OCI-LY7 (cell line): ENCODE measurements at regions of chr10 and their contacts with region 1.

Region 1: DNA sequence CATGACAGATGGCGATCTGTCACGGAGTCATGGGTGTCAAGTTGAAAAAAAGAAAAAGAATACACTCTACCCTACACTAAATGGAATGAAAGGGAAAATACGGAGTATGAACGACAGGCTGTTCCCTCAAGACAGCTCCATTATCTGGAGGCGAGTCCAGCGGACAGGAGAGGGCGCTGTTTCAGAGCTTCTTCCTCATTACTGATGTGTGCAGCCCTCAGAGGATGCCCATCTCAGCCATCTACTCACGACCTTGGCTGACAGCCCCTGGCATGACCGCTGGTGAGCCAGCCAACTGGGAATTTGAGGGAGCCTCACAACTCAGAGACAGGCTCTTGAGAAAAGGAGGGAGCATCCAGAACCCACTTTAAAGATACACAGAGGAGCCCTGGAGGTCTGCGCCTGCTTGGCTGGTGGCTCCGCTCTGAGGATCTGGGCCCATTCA is 49.6 kb upstream of the SMNDC1 start:
- DNase-seq: peak; percentile 89
- H3K4me3 ChIP-seq: peak overlapping the region; percentile 60
- H3K27ac ChIP-seq: peak overlapping the region; percentile 93
- H3K4me1 ChIP-seq: peaks cover 61% of the 10 kb centered on the region
- CTCF ChIP-seq: peak; percentile 98

Region 2: DNA sequence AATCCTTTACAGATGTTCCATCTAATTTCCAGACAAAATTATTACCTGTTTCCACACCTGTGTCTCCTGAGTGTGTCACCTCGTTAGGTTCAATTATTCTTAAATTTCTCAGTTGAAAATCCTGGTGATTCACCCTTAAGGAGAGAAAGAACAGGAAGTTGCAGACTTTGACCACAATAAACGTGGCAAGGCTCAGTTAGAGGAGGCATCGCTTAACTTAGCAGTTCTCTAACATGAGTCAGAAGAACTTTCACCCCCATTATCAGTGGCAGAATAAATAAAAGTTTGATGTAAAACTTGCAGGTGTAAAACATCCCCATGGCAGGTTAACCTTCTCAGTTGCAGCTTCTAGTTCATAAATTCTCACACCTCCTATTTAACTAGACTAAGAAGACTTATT is 439.4 kb before region 1 on chr10:
- CTCF ChIA-PET with region 1: no interaction called
- POLR2A ChIA-PET with region 1: no interaction called
- intact Hi-C with region 1: loop called (anchors 5 kb)
- DNase-seq: peak; percentile 81
- H3K4me3 ChIP-seq: peak overlapping the region; percentile 40
- H3K27ac ChIP-seq: peak overlapping the region; percentile 98
- H3K4me1 ChIP-seq: peaks cover 88% of the 10 kb centered on the region
- CTCF ChIP-seq: no peak

Region 3: GRCh38 chr10:109966961-109967738 is 387.2 kb before region 1 on chr10:
- CTCF ChIA-PET with region 1: no interaction called
- POLR2A ChIA-PET with region 1: no interaction called
- intact Hi-C with region 1: no loop called
- DNase-seq: no peak
- H3K4me3 ChIP-seq: no peak overlapping the region
- H3K27ac ChIP-seq: no peak overlapping the region
- H3K4me1 ChIP-seq: no peaks in the 10 kb centered on the region
- CTCF ChIP-seq: no peak

Region 4: DNA sequence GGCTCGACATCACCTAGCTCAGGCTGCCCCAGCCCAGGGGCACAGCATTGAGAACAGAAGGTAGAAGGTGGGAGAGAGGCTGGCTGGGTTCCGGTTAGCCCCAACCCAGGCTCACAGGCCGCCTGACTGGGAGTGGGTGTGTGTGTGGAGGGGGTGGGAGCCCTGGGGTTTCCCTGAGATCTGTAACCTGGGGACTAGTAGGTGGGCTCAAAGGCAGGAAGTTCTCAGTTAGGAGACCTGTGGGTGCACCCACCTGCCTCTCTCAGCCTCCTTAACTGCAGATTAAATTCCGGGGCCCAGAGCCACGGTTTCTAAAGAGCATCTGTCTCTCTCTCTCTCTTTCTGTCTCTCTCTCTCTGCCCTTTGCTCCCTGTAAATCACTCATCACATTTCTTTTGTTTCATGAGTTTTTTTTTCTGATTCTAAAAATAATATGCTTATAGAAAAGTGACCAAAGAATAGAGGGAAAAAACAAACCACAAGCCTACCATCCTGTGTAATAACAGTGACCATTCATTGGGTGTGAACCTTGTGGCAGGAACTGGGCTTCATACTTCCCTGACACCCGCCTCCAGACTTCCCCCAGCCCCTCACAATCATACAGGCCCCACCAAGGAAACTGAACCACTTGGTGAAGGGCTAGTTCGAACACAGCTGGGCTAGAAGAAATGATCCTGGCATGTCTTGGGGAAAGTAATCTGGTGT is 33.8 kb after region 1 on chr10:
- CTCF ChIA-PET with region 1: no interaction called
- POLR2A ChIA-PET with region 1: interaction called, 10 read pairs
- intact Hi-C with region 1: loop called (anchors 2 kb)
- DNase-seq: peak; percentile 53
- H3K4me3 ChIP-seq: peak overlapping the region; percentile 1
- H3K27ac ChIP-seq: peak overlapping the region; percentile 22
- H3K4me1 ChIP-seq: peaks cover 36% of the 10 kb centered on the region
- CTCF ChIP-seq: no peak

Region 5: DNA sequence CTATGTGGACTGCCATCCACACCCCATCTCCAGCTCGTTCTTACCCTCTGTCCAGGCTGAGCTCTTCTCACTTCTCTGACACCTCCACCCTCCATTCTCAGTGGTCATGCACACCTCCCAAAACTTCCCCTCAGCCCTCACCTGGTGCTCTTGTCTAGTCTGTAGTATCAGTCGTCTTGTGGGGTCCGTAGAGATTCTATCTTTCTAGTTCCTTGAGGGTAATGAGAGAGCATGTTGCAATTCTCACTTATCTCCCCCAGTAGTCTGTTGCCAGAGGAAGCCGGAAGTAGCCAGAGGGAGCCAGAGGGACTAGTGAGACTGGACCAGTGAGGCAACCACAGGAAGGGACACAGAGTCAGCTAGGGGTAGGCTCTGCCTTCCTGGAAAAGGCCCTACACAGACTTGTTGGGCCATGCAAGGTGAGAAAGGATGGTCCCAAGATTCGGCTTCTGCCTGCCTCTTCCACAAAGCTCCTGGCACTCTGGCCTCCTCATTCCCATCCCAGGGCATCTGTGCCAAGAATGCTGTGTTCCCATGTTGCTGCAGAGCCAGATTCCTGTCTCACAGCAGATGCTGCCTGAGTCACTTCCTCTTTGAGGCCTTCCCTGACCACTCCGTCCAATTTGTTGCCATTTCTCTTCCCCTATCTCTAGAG is 92.7 kb after region 1 on chr10:
- CTCF ChIA-PET with region 1: no interaction called
- POLR2A ChIA-PET with region 1: interaction called, 3 read pairs
- intact Hi-C with region 1: loop called (anchors 5 kb)
- DNase-seq: no peak
- H3K4me3 ChIP-seq: no peak overlapping the region
- H3K27ac ChIP-seq: no peak overlapping the region
- H3K4me1 ChIP-seq: peaks cover 7% of the 10 kb centered on the region
- CTCF ChIP-seq: no peak

Region 6: DNA sequence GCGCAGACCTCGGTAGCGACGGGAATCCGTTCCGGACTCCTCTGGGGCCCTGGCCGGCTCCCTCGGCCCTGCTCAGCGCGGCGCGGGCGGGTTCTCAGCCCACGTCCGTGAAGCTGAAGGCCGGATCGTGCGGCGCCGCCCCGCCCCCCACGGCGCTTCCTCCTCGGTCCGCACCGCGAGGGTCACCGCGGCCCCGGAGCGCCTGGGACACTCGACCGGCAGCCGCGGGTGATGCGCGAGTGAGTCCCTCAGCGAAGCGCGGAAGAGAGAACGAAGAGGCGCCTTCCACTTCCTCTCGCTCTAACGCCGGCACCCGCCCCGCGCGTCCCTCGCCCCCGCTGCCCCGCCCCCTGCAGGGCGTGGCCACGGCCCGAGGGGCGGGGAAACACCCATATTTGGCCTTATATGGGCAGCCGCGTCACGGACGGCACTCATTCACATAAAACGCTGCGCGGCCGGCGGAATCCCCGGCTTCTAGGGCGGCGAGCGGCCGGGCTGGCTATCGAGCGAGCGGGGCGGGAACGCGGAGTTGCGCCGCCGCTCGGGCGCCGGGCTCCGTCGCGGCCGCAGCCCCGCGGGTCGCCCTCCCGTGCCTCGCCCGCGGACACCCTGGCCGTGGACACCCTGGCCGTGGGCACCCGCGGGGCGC is 143.2 kb after region 1 on chr10 and contains the start of gene DUSP5:
- CTCF ChIA-PET with region 1: interaction called, 5 read pairs
- POLR2A ChIA-PET with region 1: interaction called, 3 read pairs
- intact Hi-C with region 1: loop called (anchors 1 kb)
- DNase-seq: peak; percentile 96
- H3K4me3 ChIP-seq: peak within 1 kb of the TSS; percentile 70
- H3K27ac ChIP-seq: no peak within 1 kb of the TSS
- H3K4me1 ChIP-seq: peaks cover 36% of the 10 kb centered on the region
- CTCF ChIP-seq: no peak
- total RNA-seq, gene DUSP5: 0.06 and 0.08 TPM in 2 replicates

Region 7: GRCh38 chr10:110535958-110536891 is 181.9 kb after region 1 on chr10:
- CTCF ChIA-PET with region 1: interaction called, 6 read pairs
- POLR2A ChIA-PET with region 1: interaction called, 3 read pairs
- intact Hi-C with region 1: loop called (anchors 1 kb)
- DNase-seq: peak; percentile 57
- H3K4me3 ChIP-seq: peak overlapping the region; percentile 8
- H3K27ac ChIP-seq: no peak overlapping the region
- H3K4me1 ChIP-seq: peaks cover 40% of the 10 kb centered on the region
- CTCF ChIP-seq: peak; percentile 74

Region 8: GRCh38 chr10:110864662-110865140 is 510.4 kb after region 1 on chr10:
- CTCF ChIA-PET with region 1: no interaction called
- POLR2A ChIA-PET with region 1: no interaction called
- intact Hi-C with region 1: loop called (anchors 5 kb)
- DNase-seq: peak; percentile 89
- H3K4me3 ChIP-seq: peak overlapping the region; percentile 60
- H3K27ac ChIP-seq: peak overlapping the region; percentile 92
- H3K4me1 ChIP-seq: peaks cover 100% of the 10 kb centered on the region
- CTCF ChIP-seq: no peak